OCI-LY7 (cell line): ENCODE measurements at regions of chr16 and their contacts with region 1.

Region 1: GRCh38 chr16:19086322-19087199 is 19.1 kb downstream of the COQ7 start:
- DNase-seq: peak; percentile 78
- H3K4me3 ChIP-seq: no peak overlapping the region
- H3K27ac ChIP-seq: no peak overlapping the region
- H3K4me1 ChIP-seq: peaks cover 11% of the 10 kb centered on the region
- CTCF ChIP-seq: peak; percentile 97

Region 2: DNA sequence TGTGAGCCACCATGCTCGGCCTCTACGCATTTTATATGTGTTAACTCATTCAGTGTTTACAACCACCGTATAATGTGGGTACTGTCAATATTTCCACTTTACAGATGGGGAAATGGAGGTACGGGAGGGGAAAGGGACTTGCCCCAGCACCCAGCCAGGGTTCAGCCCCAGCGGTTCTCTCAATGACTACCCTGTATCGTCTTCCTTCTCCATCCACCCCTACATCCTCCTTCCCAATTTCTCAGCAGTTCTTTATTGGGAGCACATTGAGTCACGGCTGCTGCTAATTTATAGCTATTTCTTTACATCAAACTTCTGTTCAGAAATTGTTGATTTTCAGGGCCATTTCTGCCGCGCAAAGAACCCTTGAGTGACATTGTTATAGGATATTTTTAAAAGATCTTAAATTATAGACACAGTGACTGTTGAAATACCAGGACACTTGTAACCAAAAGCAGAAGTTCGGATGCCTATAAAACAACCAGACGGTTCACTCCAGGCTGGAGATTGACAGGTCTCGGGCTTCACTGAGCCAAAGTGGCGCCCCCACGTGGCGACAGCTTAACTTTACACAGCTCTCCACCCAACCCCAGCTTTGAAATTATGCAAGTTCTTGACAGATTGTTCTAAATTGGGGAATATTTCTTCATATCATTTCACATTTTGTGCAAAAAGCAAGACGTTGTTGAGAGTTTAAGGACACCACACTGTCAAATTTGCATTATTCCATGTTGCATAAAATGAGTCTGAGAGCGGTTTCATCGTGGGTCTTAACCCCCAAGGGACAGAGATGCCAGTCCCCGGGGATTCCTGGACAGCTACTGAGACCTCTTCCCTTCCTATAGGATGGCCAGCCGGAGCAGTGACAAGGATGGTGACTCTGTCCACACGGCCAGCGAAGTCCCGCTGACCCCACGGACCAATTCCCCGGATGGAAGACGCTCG is 93.3 kb after region 1 on chr16:
- CTCF ChIA-PET with region 1: no interaction called
- POLR2A ChIA-PET with region 1: interaction called, 4 read pairs
- intact Hi-C with region 1: loop called (anchors 2 kb)
- DNase-seq: peak; percentile 63
- H3K4me3 ChIP-seq: no peak overlapping the region
- H3K27ac ChIP-seq: no peak overlapping the region
- H3K4me1 ChIP-seq: no peaks in the 10 kb centered on the region
- CTCF ChIP-seq: peak; percentile 91

Region 3: DNA sequence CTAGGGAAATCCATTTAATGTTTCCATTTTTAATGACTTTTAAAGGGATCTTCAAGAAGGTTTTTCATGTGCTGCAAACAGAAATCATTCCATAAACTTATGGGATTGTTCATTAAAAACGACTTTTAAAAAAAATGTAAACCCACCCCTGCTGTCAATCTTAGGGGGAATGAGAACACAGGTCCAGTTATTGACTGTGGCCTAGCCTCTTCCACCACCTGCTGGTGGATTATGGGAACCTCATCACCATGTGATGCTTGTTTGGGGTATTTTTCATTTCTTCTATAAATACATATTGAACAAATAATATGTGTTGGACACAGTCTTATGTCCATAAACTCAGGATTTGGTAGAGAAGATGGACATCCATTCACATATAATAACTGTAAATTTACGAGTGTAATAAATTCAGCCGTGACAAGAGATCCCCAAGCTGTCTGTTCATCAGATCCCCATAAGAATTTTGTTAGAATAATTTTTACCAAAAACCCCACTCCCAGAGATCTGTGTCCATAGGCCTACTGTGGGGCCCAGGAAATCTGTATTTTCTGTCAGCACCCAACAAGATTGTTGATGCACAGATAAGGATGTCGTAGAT is 289.1 kb after region 1 on chr16:
- CTCF ChIA-PET with region 1: no interaction called
- POLR2A ChIA-PET with region 1: no interaction called
- intact Hi-C with region 1: loop called (anchors 1 kb)
- DNase-seq: peak; percentile 78
- H3K4me3 ChIP-seq: no peak overlapping the region
- H3K27ac ChIP-seq: no peak overlapping the region
- H3K4me1 ChIP-seq: peaks cover 12% of the 10 kb centered on the region
- CTCF ChIP-seq: peak; percentile 97

Region 4: DNA sequence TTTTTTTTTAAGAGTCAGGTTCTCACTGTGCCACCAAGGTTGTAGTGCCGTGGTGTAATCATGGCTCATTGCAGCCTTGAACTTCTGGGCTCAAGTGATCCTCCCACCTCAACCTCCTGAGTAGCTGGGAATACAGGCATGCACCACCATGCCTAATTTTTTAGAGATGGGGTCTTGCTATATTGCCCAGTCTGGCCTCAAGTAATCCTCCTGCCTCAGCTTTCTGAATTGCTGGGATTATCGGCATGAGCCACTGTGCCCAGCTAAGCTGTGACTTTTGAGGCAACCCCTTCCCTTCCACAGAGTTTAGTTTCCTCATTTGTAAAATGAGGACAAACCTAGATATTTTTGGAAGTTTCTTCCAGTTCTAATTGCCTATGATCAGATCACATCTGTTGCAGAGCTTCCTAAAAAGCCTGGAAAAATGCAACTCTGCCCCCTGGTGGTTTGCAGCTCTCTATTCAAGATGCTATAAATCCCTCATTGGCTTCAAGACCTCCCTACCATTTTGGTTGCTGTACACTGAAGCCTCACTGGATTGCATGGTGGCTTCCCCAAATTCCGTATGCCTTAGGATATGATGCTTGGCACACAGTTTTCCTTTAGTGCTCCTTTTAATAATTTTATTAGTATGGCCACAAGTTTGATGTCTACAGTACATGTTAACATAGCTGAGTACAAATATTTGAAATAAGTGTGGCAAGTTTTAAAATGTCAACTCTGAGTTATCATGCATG is 416.0 kb after region 1 on chr16:
- CTCF ChIA-PET with region 1: no interaction called
- POLR2A ChIA-PET with region 1: no interaction called
- intact Hi-C with region 1: loop called (anchors 1 kb)
- DNase-seq: peak; percentile 73
- H3K4me3 ChIP-seq: no peak overlapping the region
- H3K27ac ChIP-seq: no peak overlapping the region
- H3K4me1 ChIP-seq: no peaks in the 10 kb centered on the region
- CTCF ChIP-seq: peak; percentile 90